ENCODE measurements at regions of chr15 and their contacts with region 1.

Region 1: GRCh38 chr15:74460871-74461846 is at the start of gene UBL7:
- DNase-seq: peak; percentile 99
- ATAC-seq: peak; percentile 97
- H3K4me3 Mint-ChIP-seq: peak within 1 kb of the TSS; percentile 96
- H3K27ac Mint-ChIP-seq: peak within 1 kb of the TSS; percentile 97
- H3K4me1 Mint-ChIP-seq: peaks cover 47% of the 10 kb centered on the region
- H3K27me3 Mint-ChIP-seq: no peaks in the 10 kb centered on the region
- total RNA-seq, gene UBL7: 47.5 to 48.6 TPM

Region 2: DNA sequence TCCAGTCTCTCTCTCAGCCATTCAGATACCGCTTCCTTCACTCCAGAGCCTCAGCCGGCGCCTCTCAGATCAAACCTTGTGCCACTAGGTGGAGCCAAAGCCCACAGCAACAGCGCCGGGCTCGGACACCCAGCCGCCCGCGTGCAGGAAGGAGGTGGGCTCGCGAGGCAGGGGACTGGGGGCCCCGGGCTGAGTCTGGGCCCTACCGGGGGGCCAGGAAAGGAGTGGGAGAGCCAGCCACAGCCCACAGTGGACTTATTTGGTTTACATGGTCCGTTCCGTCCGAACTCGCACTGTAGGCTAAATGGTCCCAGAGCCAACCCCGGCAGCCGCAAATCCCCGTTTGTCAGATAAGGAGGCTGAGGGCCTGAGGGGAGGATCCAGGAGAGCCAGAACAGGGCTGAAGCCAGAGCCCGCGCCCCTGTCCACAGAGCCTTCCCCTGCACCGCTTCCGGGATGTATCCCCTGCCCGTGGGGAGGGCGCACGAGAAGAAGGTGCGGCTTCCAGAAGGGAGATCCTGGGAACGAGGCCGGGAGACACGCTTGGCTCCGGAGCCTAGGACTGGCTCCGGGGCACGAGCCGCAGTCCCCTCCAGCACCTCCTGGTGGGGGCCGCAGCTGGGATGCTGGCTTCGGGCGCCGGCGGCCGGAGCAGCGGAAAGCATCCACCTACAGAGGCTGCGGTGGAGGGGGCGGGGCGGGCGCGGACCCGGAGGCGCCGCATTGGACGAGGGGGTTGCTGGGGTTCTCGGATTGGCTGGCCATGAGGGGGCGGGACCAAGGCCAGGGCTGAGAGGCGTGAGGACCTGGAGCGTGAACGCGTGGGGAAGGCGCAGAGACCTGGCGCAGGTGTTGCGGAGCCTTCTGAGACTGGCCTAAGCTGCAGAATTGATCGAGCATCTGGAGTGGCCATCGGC is 87.2 kb before region 1 on chr15:
- CTCF ChIA-PET with region 1: interaction called, 7 read pairs
- POLR2A ChIA-PET with region 1: no interaction called
- intact Hi-C with region 1: loop called in 1 of 2 experiments (anchors 1 kb)
- DNase-seq: peak; percentile 97
- ATAC-seq: peak; percentile 84
- H3K4me3 Mint-ChIP-seq: peak overlapping the region; percentile 76
- H3K27ac Mint-ChIP-seq: no peak overlapping the region
- H3K4me1 Mint-ChIP-seq: peaks cover 31% of the 10 kb centered on the region
- H3K27me3 Mint-ChIP-seq: peaks cover 7% of the 10 kb centered on the region

Region 3: GRCh38 chr15:74433592-74434262 is 27.4 kb before region 1 on chr15 and contains the start of gene SEMA7A:
- CTCF ChIA-PET with region 1: interaction called, 7 read pairs
- POLR2A ChIA-PET with region 1: interaction called, 3 read pairs
- intact Hi-C with region 1: loop called (anchors 1 kb)
- DNase-seq: peak; percentile 90
- ATAC-seq: peak; percentile 89
- H3K4me3 Mint-ChIP-seq: peak within 1 kb of the TSS; percentile 83
- H3K27ac Mint-ChIP-seq: peak within 1 kb of the TSS; percentile 56
- H3K4me1 Mint-ChIP-seq: peaks cover 59% of the 10 kb centered on the region
- H3K27me3 Mint-ChIP-seq: no peaks in the 10 kb centered on the region
- total RNA-seq, gene SEMA7A: 57.3 to 57.7 TPM

Region 4: DNA sequence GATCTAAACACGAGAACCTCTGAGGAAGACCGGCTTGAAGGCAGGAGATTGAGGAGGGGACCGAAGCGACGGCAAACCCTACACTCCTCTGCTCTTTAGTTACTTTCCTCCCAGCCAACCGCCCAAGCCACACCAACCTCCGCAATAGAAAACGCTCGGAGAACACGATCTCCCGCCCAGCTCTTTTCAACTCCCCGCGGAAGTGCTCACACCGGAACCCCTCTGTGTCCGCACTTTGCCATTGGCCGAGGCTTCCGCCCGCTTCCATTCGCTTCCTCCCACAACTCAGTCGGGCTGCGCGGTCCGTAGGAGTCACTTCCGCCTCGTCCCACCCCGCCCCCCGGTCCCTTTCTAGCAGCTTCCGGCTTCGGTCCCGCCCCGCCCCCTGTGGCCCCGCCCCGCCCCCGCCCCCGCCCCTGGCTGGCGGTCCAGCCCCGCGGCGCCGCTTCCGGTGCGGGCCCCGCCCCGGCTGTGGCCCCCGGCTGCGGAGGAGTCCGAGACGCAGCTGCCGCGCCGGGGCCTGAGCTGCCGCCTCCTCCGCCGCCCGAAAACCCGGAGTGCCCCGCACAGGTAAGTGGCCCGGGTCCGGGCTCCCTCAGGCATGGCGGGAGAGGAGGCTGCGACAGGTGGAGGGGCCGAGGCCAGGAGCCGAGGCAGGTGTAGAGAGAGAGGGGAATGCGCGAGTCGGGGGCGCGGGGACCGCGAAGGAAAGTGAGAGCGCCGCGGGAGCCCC is 79.8 kb after region 1 on chr15 and contains the start of gene ARID3B:
- CTCF ChIA-PET with region 1: interaction called, 13 read pairs
- POLR2A ChIA-PET with region 1: interaction called, 13 read pairs
- intact Hi-C with region 1: loop called (anchors 1 kb)
- DNase-seq: peak; percentile 99
- ATAC-seq: peak; percentile 88
- H3K4me3 Mint-ChIP-seq: peak within 1 kb of the TSS; percentile 94
- H3K27ac Mint-ChIP-seq: peak within 1 kb of the TSS; percentile 98
- H3K4me1 Mint-ChIP-seq: peaks cover 43% of the 10 kb centered on the region
- H3K27me3 Mint-ChIP-seq: peaks cover 2% of the 10 kb centered on the region
- total RNA-seq, gene ARID3B: 23.9 to 25.4 TPM

Region 5: GRCh38 chr15:74695597-74696397 is 234.6 kb after region 1 on chr15 and contains the start of gene EDC3:
- CTCF ChIA-PET with region 1: no interaction called
- POLR2A ChIA-PET with region 1: no interaction called
- intact Hi-C with region 1: loop called in 1 of 2 experiments (anchors 1 kb)
- DNase-seq: peak; percentile 92
- ATAC-seq: peak; percentile 91
- H3K4me3 Mint-ChIP-seq: peak within 1 kb of the TSS; percentile 98
- H3K27ac Mint-ChIP-seq: peak within 1 kb of the TSS; percentile 99
- H3K4me1 Mint-ChIP-seq: peaks cover 27% of the 10 kb centered on the region
- H3K27me3 Mint-ChIP-seq: no peaks in the 10 kb centered on the region
- total RNA-seq, gene EDC3: 44.7 to 45.0 TPM

Region 6: DNA sequence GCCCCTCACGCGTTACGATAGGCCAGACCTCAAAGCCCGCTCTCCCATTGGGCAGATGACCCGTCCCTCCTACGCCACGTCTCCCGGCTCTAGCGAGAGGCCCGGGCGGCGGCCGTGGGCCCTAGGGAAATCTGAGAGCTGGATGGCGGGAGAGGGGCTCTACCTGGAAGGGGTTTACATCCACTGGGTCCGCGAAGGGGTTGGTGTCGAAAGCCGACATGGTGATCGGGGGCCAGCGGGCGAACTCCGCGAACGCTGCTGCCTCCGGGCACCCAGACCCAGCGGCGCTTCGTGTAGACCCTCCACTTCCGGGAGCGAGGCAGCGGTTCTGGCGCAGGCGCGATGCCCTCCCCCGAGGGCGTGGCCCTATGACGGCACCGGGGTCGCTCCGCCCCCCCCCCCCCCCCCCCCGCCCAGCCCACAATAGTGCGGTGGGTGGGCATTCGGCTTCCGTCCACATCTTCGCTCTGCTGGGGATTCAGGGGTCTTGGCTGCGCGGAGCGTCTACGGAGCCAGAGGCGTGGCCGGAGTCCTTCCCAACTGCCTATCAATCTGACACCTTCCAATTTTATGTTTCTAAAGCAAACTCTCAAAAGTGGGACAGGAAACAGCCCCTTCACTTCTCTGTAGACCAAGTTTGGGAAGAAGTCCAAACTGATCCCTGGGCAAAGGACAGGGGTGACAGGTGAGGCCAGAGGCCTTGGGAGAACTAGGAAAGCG is 412.0 kb after region 1 on chr15 and contains the start of gene SCAMP2:
- CTCF ChIA-PET with region 1: no interaction called
- POLR2A ChIA-PET with region 1: no interaction called
- intact Hi-C with region 1: loop called in 1 of 2 experiments (anchors 1 kb)
- DNase-seq: peak; percentile 94
- ATAC-seq: peak; percentile 84
- H3K4me3 Mint-ChIP-seq: peak within 1 kb of the TSS; percentile 87
- H3K27ac Mint-ChIP-seq: peak within 1 kb of the TSS; percentile 87
- H3K4me1 Mint-ChIP-seq: peaks cover 48% of the 10 kb centered on the region
- H3K27me3 Mint-ChIP-seq: no peaks in the 10 kb centered on the region
- total RNA-seq, gene SCAMP2: 61.6 to 83.4 TPM

Region 7: DNA sequence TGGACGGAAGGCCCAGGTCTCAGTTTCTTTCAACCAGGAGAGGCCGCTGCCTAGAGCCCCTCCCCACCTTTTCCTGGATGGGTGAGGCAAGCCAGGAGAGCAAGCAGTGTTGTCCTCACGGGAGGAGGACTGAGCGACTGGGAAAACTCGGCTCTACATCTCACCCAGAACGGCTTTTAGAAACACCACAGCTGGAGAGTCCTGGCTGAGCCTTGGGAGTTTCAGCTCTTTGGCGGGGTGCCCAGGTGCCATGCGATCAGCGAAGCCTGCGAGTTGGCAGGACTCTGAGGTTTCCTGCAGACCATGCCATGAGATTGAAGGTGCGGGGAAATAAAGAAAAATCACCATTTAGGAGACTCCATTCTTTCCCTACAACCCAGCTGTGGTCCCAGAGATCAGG is 588.2 kb after region 1 on chr15:
- CTCF ChIA-PET with region 1: no interaction called
- POLR2A ChIA-PET with region 1: no interaction called
- intact Hi-C with region 1: no loop called
- DNase-seq: no peak
- ATAC-seq: no peak
- H3K4me3 Mint-ChIP-seq: no peak overlapping the region
- H3K27ac Mint-ChIP-seq: no peak overlapping the region
- H3K4me1 Mint-ChIP-seq: peaks cover 8% of the 10 kb centered on the region
- H3K27me3 Mint-ChIP-seq: no peaks in the 10 kb centered on the region